Posterior cingulate gyrus (tissue), 11 donors: ENCODE measurements at regions of chr10 and their contacts with region 1.

Region 1: DNA sequence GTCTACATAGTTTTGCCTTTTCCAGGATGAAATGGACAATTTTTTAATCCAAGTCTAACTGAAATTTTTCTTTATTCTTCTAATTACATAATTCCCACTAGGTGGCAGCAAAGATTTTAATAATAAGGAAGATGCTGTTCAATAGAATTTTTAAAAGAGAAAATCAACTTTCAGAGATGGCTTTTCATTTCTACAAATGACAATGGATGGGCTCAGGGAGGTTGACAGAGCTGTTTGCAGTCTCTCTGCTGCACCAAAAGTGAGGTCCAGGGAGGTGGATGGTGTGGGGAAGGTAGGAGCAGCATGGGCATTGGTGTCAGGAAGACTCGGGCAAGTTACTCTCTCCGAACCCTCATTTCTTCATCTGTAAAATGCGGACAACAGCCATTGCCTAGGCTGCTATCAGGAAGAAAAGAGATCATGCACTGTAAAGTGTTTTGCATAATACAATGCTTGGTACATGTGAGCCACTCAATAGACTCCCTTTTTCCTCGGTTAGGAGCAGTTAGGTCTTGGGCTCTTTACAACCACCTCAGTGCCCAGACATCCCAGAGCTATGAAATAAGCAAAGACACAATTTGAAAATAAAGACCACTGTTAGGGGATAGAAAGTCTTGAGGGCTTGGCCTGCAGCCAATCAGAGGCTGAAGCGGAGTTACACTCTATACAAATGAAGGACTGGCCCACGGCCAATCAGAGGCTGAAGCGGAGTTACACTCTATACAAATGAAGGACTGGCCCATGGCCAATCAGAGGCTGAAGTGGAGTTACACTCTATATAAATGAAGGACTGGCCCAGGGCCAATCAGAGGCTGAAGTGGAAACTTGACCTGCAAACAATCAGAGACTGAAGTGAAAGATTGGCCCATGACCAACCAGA is 107.1 kb downstream of the ABLIM1 start:
- DNase-seq: peak in 2 of 10 donors; percentile 20 to 83

Region 2: DNA sequence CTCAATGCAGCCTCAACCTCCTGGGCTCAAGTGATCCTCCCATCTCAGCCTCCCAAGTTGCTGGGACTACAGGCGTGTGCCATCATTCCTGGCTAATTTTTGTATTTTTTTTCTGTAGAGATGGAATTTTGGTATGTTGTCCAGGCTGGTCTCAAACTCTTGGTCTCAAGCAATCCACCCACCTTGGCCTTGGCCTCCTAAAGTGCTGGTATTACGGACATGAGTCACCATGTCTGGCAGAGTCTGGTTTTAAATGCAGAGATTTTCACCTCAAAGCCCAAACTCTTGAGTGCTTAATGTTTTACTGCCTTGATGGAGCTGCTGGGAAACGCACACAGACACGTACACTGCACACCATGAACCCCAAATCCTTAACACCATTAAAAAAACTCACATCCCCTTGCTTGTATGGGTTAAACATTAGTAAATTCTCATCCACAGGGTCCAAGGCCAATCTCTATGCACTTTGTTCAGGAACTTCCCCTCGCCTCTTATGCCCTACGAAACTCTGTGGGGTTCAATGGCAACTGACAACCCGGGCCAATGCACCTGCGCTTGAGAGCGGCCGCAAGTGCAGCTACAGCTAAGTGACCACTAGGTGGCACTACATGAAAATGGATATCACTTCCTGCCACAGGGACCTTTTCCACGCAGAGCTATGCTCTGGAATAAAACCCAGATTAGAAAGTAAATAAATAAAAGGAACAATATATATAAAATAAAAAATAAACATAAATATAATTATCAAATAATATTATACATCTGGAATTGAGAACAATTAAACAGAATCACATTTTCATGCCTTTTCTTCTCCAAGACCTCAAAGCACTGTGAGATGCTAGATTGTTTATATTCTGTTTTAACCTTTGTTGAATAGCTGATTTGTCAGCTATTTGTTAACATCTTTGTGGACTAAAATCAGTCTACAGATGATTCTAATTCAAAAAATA is 79.8 kb before region 1 on chr10:
- intact Hi-C with region 1: loop called (anchors 2 kb)
- DNase-seq: peak; percentile 38 to 95 (median 67)

Region 3: GRCh38 chr10:114703377-114704107 is 152.5 kb after region 1 on chr10:
- intact Hi-C with region 1: loop called (anchors 10 kb)
- DNase-seq: no peak

Region 4: GRCh38 chr10:115129752-115130151 is 578.8 kb after region 1 on chr10:
- intact Hi-C with region 1: loop called (anchors 2 kb)
- DNase-seq: no peak